T-cell (primary cell): ENCODE measurements at regions of chr3 and their contacts with region 1.

Region 1: DNA sequence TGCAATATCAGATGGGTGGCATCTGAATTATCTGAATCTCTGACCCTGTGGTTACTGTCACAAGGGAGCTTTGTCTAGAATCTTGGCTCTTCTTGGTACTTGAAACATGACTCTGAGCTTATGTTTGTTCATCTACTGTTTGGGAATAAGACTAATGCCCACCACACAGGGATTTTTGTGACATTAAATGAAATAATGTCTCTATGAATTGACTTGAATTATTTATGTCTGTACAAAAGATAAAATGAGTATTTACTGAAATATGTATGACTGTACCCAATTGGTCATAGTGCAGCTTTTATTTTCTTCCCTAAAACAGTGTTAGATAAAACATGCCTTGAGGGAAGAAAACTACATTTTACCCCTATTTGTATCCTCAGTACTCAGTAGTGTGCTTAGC is 87.9 kb upstream of the ZPLD1 start:
- DNase-seq: no peak
- ATAC-seq: no peak
- H3K4me3 ChIP-seq: no peak overlapping the region
- H3K4me3 Mint-ChIP-seq: no peak overlapping the region
- H3K27ac ChIP-seq: no peak overlapping the region
- H3K27ac Mint-ChIP-seq: no peak overlapping the region
- H3K4me1 ChIP-seq: no peaks in the 10 kb centered on the region
- H3K4me1 Mint-ChIP-seq: no peaks in the 10 kb centered on the region
- H3K27me3 ChIP-seq: no peaks in the 10 kb centered on the region
- H3K27me3 Mint-ChIP-seq: peaks cover 14% of the 10 kb centered on the region in 2 donors

Region 2: GRCh38 chr3:102361101-102361500 is 14.2 kb after region 1 on chr3:
- CTCF ChIA-PET with region 1: no interaction called
- POLR2A ChIA-PET with region 1: no interaction called
- DNase-seq: no peak
- ATAC-seq: no peak
- H3K4me3 ChIP-seq: no peak overlapping the region
- H3K4me3 Mint-ChIP-seq: no peak overlapping the region
- H3K27ac ChIP-seq: no peak overlapping the region
- H3K27ac Mint-ChIP-seq: no peak overlapping the region
- H3K4me1 ChIP-seq: no peaks in the 10 kb centered on the region
- H3K4me1 Mint-ChIP-seq: no peaks in the 10 kb centered on the region
- H3K27me3 ChIP-seq: no peaks in the 10 kb centered on the region
- H3K27me3 Mint-ChIP-seq: no peaks in the 10 kb centered on the region

Region 3: DNA sequence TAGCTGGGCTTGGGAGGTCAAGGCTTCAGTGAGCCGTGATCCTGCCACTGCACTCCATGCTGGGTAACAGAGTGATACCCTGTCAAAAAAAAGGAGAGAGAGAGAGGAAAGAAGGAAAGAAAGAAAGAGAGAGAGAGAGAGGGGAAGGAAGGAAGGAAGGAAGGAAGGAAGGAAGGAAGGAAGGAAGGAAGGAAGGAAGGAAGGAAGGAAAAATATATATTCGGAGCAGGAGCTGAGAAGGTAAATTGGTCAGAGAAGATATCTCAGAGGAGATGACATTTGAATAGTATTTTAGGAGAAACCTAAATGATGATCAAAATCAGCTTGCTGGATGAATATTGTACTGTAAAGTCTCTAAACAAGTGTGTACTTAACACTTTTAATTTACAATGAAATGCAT is 721.1 kb after region 1 on chr3:
- CTCF ChIA-PET with region 1: no interaction called
- POLR2A ChIA-PET with region 1: interaction called in 1 of 2 experiments, 31 read pairs
- DNase-seq: no peak
- ATAC-seq: no peak
- H3K4me3 ChIP-seq: no peak overlapping the region
- H3K4me3 Mint-ChIP-seq: no peak overlapping the region
- H3K27ac ChIP-seq: no peak overlapping the region
- H3K27ac Mint-ChIP-seq: no peak overlapping the region
- H3K4me1 ChIP-seq: no peaks in the 10 kb centered on the region
- H3K4me1 Mint-ChIP-seq: no peaks in the 10 kb centered on the region
- H3K27me3 ChIP-seq: no peaks in the 10 kb centered on the region
- H3K27me3 Mint-ChIP-seq: no peaks in the 10 kb centered on the region